OCI-LY7 (cell line): ENCODE measurements at regions of chr2 and their contacts with region 1.

Region 1: DNA sequence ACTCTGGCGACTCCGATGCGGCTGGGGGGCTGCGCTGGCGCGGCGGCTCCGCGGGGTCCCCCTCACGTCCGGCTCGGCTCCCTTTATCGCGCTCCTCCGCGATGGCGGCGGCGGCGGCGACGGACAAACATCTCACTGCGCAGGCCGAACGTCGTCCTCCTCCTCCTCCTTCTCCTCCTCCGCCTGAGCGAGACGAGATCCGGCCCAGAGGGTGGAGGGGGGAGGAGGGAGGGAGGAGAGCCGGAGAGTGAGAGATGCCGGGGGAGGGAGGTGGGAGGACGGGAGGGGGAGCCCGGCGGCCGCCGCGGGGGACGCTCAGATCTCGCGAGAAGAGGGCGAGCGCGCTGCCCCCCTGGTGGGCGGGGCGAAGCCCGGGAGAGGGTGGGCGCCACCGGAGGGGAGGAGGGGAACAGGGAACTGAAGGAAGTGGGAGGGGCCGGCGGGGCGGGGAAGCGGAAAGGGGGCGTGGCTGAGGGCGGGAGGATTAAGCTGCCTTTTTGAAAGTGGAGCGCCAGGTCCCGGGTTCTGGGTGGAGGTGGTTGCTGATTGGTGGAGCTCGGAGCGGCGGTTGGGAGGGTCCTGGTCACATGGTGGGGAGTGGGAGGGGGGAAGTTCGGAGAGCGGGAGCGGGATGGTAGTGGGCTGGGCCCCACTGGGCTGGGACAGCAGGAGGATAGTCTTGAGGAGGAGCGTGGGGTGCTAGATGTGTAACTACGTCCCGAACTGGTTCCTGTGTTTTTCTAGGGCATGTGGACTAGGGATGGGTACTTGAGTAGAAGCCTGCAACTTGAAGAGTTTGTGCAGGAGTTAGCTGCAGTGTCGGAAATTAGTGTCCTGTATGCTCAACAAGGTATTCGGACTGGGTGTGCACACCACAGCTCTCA is at the start of gene CUL3:
- DNase-seq: peak; percentile 98
- H3K4me3 ChIP-seq: peak within 1 kb of the TSS; percentile 98
- H3K27ac ChIP-seq: peak within 1 kb of the TSS; percentile 92
- H3K4me1 ChIP-seq: peaks cover 51% of the 10 kb centered on the region
- CTCF ChIP-seq: no peak
- total RNA-seq, gene CUL3: 50.6 and 56.4 TPM in 2 replicates

Region 2: DNA sequence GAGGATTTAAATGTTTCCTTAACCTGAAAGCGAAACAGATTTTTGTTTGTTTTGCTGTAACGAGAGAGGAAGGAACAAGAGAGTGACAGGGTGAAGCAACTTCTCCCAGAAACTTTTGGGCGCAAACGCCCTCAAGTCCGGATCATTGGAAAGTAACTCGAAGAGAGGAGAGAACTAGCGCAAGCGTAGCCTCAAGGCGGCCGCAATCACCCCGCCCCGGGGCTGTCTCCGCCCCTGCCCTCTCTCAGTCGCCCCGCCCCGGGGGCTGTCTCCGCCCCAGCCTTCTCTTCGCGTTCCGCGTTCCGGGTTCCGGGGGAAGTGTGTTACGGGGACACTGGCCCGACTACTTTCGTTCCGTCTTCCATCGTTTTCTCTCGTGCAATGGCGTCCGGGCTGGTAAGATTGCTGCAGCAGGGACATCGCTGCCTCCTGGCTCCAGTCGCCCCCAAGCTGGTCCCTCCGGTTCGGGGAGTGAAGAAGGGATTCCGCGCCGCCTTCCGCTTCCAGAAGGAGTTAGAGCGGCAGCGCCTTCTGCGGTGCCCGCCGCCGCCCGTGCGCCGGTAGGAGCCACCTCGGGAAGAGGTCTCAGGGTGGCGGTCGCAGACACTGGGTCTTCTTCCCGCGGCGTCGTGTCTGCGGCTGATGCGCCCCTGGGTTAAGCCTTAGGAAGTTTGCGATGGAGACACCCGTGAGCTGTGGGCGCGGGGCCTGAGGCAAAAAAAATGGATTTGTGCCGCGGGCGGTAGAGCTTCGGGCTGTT is 628.2 kb before region 1 on chr2 and contains the start of gene MRPL44:
- CTCF ChIA-PET with region 1: no interaction called
- POLR2A ChIA-PET with region 1: no interaction called
- intact Hi-C with region 1: loop called (anchors 5 kb)
- DNase-seq: peak; percentile 96
- H3K4me3 ChIP-seq: peak within 1 kb of the TSS; percentile 91
- H3K27ac ChIP-seq: peak within 1 kb of the TSS; percentile 29
- H3K4me1 ChIP-seq: peaks cover 82% of the 10 kb centered on the region
- CTCF ChIP-seq: no peak
- total RNA-seq, gene MRPL44: 25.4 and 36.2 TPM in 2 replicates

Region 3: DNA sequence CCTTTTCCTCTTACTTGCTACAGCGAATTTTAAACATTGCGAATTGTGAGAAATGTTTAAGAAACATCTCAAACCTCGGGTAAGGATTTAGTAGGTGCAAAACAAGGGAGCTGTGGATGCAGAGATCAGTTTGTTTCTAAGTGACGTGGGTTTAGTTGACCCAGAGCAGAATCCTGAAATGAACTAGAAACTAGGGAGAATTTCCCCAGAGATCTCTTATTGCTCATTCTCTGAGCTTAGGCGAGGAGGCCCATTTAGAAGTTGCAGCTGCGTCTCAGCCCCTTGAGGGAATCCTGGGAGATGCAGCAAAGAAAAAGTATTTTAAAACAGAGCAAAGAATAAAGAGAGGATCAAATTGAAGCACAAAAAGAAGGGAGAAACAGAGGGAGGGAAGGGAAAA is 212.8 kb before region 1 on chr2:
- CTCF ChIA-PET with region 1: no interaction called
- POLR2A ChIA-PET with region 1: no interaction called
- intact Hi-C with region 1: no loop called
- DNase-seq: no peak
- H3K4me3 ChIP-seq: no peak overlapping the region
- H3K27ac ChIP-seq: no peak overlapping the region
- H3K4me1 ChIP-seq: peaks cover 3% of the 10 kb centered on the region
- CTCF ChIP-seq: no peak

Region 4: GRCh38 chr2:224570328-224570993 is 15.0 kb before region 1 on chr2:
- CTCF ChIA-PET with region 1: interaction called, 3 read pairs
- POLR2A ChIA-PET with region 1: interaction called, 46 read pairs
- intact Hi-C with region 1: no loop called
- DNase-seq: no peak
- H3K4me3 ChIP-seq: no peak overlapping the region
- H3K27ac ChIP-seq: no peak overlapping the region
- H3K4me1 ChIP-seq: peaks cover 55% of the 10 kb centered on the region
- CTCF ChIP-seq: no peak

Region 5: DNA sequence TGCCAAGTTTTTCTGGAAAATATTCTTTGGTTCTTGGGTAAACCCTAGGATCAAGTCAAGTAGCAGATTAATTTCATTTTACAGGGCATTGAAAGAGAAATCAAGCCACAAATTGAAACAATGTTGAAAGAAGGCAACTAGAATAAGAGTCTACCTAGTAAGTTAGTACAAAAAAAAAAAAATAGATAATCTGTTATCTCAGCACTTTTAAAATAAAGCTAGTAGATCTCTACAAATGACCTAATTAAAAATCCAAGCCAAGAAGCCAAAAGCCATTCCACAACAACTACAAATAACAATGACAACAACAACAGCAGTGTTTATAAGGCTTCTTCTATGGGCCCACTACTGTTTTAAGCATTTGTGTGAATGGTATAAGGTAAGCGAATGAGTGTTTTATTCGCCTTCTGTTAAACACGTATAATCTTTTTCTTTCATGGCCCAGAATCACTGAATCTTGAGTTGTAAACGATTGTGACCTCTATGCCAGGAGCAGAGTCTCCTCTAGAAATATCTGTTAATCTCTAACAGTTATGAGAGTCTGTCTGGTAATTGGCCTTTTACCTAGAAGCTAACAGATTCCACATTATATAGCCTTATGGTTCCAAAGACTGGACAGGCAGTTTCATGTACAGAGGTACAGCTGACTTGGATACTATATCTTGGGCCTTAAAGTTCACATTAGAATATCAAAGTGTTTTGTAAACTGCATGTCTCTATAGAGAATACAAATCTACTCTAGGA is 28.3 kb after region 1 on chr2:
- CTCF ChIA-PET with region 1: no interaction called
- POLR2A ChIA-PET with region 1: no interaction called
- intact Hi-C with region 1: no loop called
- DNase-seq: no peak
- H3K4me3 ChIP-seq: no peak overlapping the region
- H3K27ac ChIP-seq: no peak overlapping the region
- H3K4me1 ChIP-seq: peaks cover 10% of the 10 kb centered on the region
- CTCF ChIP-seq: no peak

Region 6: DNA sequence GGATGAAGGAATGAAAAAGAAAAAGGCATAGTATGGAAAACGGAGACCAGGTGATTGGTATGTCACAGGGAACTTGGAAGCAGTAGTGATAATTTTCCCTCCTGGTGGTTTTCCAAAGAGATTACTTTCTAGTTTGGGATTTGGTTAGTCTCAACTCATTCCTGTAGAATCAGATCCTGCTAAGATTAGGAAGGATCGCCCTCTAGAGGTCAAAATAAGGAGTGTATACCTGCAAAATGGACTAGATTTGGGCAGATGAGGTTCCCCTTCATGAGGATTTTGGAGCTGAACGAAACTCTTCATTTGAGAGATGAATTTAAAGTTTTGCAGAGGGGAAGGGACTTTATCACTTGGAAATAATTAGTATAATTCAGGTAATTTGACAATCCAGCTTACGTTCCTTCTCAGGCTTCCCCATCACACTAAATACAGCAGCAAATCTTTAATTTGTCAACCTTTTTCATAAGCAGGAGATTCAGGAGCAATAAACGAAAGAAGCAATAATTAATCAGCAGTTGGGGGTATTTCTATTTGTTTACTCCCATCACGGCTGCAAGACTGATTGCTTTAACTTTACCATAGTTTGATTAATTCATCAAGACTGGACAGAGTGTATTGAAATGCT is 65.5 kb after region 1 on chr2:
- CTCF ChIA-PET with region 1: interaction called, 3 read pairs
- POLR2A ChIA-PET with region 1: interaction called, 11 read pairs
- intact Hi-C with region 1: loop called (anchors 2 kb)
- DNase-seq: peak; percentile 85
- H3K4me3 ChIP-seq: peak overlapping the region; percentile 38
- H3K27ac ChIP-seq: peak overlapping the region; percentile 34
- H3K4me1 ChIP-seq: peaks cover 35% of the 10 kb centered on the region
- CTCF ChIP-seq: peak; percentile 98